ENCODE measurements at regions of chr2 and their contacts with region 1.

Region 1: GRCh38 chr2:3753561-3753960 is 50.2 kb downstream of the DCDC2C start:
- DNase-seq: no peak

Region 2: DNA sequence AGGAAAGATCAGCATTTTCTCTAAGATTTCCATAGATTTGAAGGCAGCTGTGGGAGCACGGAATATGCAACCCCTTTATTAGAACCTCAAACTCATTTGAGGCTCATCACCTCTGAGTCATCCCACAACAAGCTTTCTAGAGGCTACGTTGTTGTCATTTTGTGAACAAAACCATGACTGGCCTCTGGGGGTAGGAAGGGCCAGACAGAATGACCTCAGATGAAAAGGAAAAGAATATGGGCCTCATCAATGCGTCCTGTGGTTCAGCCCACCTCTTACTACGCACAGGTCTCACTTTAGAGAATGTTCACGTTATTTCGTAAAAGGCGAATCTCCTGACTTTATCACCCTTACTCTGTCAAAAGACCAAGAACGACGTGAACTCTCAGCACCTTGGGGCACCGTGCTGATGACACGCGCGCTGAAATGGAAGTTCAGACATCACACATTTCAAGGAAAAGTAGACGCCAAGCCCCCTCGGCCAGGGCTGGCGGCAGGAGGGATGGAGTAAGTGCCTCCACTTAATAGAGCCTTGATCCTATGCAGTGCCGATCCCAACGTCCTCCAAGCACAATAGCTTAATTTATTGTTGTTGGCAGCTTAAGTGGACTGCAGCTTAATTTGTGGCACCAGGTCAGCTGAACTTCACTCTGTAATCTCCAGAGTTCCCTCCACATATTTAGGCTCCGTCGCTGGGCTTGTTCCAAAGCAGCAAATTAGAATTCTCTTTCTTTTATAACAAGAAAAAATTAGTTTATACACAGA is 584.3 kb before region 1 on chr2:
- intact Hi-C with region 1: no loop called
- DNase-seq: peak; percentile 53

Region 3: DNA sequence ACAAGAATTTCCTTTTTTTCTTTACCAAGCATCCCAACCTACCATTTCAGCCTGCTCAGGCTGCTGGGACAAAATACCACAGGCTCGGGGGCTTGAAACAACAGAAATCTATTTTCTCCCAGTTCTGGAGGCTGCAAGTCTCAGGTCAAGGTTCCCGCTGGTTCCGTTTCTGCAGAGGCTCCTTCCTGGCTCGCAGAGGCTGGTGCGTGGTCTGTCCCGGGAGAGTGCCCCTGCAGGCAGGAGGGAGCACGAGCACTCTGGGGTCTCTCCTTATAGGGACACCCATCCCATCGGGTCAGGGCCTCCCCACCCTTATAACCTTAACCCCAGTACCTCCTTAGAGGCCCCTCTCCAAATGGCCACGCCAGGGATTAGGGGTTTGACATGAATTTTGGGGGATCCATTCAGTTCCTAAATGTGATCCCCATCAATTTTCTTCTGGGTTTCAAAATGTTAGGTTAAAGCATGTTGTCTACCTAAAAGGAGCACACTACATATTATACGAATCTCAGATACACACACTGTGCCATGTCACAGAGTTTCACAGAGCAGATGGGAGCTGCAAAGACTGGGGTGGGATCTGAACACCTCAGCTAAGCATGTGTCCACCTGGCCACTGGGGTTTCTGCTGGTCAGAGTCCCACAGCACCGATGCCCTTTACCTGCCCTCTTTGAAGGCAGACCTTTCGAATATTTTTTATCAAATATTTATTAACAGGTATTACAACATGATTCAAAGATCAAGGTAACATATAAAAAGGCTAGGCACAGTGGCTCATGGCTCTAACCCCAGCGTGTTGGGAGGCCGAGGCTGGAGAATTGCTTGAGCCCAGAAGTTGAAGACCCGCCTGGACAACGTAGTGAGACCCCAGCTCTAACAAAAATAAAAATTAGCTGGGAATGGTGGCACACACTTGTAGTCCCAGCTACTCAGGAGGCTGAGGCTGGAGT is 216.6 kb before region 1 on chr2:
- intact Hi-C with region 1: no loop called
- DNase-seq: peak; percentile 84

Region 4: GRCh38 chr2:3692381-3692780 is 61.2 kb before region 1 on chr2:
- intact Hi-C with region 1: no loop called
- DNase-seq: no peak

Region 5: GRCh38 chr2:3704692-3705091 is 48.9 kb before region 1 on chr2:
- intact Hi-C with region 1: loop called in 1 of 2 experiments (anchors 1 kb)
- DNase-seq: no peak

Measured in posterior vena cava (tissue), 2 donors.